Heart right ventricle (tissue), 16 donors: ENCODE measurements at regions of chr4 and their contacts with region 1.

Region 1: GRCh38 chr4:100539706-100540105 is 21.9 kb upstream of the EMCN start:
- DNase-seq: no peak
- ATAC-seq: peak in 4 of 8 donors; percentile 9 to 66 (median 50)
- H3K4me3 ChIP-seq: no peak overlapping the region
- H3K27ac ChIP-seq: no peak overlapping the region
- H3K4me1 ChIP-seq: peaks cover 0 to 20% (median 0%) of the 10 kb centered on the region in 9 donors
- H3K27me3 ChIP-seq: no peaks in the 10 kb centered on the region
- CTCF ChIP-seq: no peak

Region 2: GRCh38 chr4:99755223-99755944 is 784.3 kb before region 1 on chr4:
- intact Hi-C with region 1: no loop called
- DNase-seq: no peak
- ATAC-seq: peak in 2 of 8 donors; percentile 25 to 79
- H3K4me3 ChIP-seq: no peak overlapping the region
- H3K27ac ChIP-seq: no peak overlapping the region
- H3K4me1 ChIP-seq: peaks cover 0 to 6% (median 0%) of the 10 kb centered on the region in 9 donors
- H3K27me3 ChIP-seq: no peaks in the 10 kb centered on the region
- CTCF ChIP-seq: no peak

Region 3: DNA sequence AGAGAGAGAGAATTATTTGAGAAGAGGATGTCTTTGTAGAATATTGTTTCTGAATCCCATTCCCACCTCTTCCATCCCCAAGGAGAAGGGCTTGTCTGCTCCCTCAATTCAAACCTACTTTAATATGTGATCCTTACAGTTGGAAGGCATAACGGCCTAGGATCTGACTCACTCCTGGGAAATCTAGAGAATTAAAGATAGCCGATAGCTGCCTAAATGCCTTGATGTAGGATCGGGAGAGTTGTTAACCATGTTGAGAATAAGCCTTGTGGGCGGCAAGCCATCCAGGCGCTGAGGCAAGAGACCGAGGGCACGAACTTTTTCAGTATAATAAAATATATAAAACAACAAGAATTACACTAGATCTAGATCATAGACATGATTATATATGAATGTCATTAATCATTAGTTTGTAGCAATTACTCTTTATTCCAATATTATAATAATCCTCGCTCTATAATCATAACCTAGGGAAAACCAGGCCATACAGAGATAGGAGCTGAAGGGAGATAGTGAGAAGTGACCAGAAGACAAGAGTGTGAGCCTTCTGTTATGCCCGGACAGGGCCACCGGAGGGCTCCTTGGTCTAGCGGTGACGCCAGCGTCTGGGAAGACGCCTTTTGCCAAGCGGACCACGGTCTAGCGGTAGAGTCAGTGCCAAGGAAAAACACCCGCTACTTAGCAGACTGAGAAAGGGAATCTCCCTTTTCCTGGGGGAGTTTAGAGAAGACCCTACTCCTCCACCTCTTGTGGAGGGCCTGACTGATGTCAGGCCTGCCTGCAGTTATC is 35.4 kb before region 1 on chr4:
- intact Hi-C with region 1: loop called in 1 of 10 experiments (anchors 1 kb)
- DNase-seq: no peak
- ATAC-seq: no peak
- H3K4me3 ChIP-seq: no peak overlapping the region
- H3K27ac ChIP-seq: no peak overlapping the region
- H3K4me1 ChIP-seq: peaks cover 0 to 32% (median 0%) of the 10 kb centered on the region in 9 donors
- H3K27me3 ChIP-seq: no peaks in the 10 kb centered on the region
- CTCF ChIP-seq: no peak

Region 4: GRCh38 chr4:100630341-100630740 is 90.6 kb after region 1 on chr4:
- intact Hi-C with region 1: no loop called
- DNase-seq: no peak
- ATAC-seq: no peak
- H3K4me3 ChIP-seq: no peak overlapping the region
- H3K27ac ChIP-seq: no peak overlapping the region
- H3K4me1 ChIP-seq: no peaks in the 10 kb centered on the region
- H3K27me3 ChIP-seq: no peaks in the 10 kb centered on the region
- CTCF ChIP-seq: no peak